Common myeloid progenitor, CD34-positive (primary cell): ENCODE measurements at regions of chr1 and their contacts with region 1.

Region 1: GRCh38 chr1:176691251-176692228 is 228.6 kb downstream of the PAPPA2 start:
- DNase-seq: peak; percentile 13 to 44 (median 44)
- H3K4me3 ChIP-seq: no peak overlapping the region
- H3K27ac ChIP-seq: no peak overlapping the region
- H3K4me1 ChIP-seq: no peaks in the 10 kb centered on the region
- H3K27me3 ChIP-seq: no peaks in the 10 kb centered on the region

Region 2: DNA sequence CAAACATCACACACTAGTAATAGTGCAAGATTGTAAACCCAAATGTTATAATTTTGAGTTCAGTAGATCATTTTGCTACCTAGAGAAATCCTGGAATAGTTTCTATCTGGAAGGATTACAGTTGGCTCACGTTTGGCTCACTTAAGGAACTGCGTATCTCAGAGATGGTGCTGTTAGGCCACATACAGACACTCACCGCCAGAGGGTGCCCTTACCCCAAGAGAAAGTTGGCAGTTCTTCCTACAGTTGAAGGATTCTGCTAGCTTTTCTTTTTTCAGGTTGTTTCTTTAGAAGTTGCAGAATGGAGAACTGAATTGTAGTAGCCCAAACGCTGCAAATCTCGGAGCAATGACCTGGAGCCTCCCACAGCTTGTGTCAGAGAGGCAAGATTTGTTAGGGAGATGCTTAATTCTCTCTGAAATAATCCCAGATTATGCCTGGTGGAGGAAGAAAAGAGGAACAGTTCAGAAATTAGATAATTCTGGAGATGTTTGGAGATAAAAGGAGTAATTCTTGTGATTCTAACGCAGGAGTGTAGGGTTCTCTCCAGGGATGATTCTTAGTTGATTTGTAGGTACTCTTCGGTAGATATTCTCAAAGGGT is 316.5 kb before region 1 on chr1:
- CTCF ChIA-PET with region 1: no interaction called
- POLR2A ChIA-PET with region 1: no interaction called
- DNase-seq: peak; percentile 52 to 81 (median 75)
- H3K4me3 ChIP-seq: no peak overlapping the region
- H3K27ac ChIP-seq: no peak overlapping the region
- H3K4me1 ChIP-seq: no peaks in the 10 kb centered on the region
- H3K27me3 ChIP-seq: no peaks in the 10 kb centered on the region

Region 3: GRCh38 chr1:176559878-176560277 is 131.7 kb before region 1 on chr1:
- CTCF ChIA-PET with region 1: interaction called, 11 read pairs
- POLR2A ChIA-PET with region 1: no interaction called
- DNase-seq: peak; percentile 26 to 63 (median 52)
- H3K4me3 ChIP-seq: no peak overlapping the region
- H3K27ac ChIP-seq: no peak overlapping the region
- H3K4me1 ChIP-seq: no peaks in the 10 kb centered on the region
- H3K27me3 ChIP-seq: peaks cover 0 to 18% (median 0%) of the 10 kb centered on the region in 5 experiments

Region 4: DNA sequence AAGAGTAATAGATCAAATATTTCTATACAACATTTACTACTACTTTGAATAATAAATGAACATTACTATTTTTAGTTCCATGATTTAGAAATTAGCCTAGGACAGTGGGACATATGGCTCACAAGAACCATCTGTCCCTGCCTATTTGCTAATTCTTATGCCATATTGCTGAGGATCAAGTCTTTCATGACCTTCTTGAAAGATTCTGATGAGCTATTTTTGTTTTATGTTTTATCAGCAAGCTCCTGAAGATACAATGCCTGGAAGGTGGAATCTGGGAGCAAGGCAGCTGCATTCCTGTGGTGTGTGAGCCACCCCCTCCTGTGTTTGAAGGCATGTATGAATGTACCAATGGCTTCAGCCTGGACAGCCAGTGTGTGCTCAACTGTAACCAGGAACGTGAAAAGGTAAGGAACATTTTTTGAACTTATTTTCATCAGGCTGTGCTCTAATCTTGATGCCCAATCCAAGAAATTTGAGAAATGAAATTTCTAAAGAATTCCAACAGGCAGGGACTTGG is 98.1 kb after region 1 on chr1:
- CTCF ChIA-PET with region 1: no interaction called
- POLR2A ChIA-PET with region 1: no interaction called
- DNase-seq: no peak
- H3K4me3 ChIP-seq: no peak overlapping the region
- H3K27ac ChIP-seq: no peak overlapping the region
- H3K4me1 ChIP-seq: no peaks in the 10 kb centered on the region
- H3K27me3 ChIP-seq: no peaks in the 10 kb centered on the region